RWPE1 (cell line): ENCODE measurements at regions of chr20 and their contacts with region 1.

Region 1: GRCh38 chr20:45138561-45139300 is 14.5 kb upstream of the WFDC12 start:
- DNase-seq: peak; percentile 80
- H3K27ac ChIP-seq: no peak overlapping the region
- CTCF ChIP-seq: peak; percentile 88

Region 2: DNA sequence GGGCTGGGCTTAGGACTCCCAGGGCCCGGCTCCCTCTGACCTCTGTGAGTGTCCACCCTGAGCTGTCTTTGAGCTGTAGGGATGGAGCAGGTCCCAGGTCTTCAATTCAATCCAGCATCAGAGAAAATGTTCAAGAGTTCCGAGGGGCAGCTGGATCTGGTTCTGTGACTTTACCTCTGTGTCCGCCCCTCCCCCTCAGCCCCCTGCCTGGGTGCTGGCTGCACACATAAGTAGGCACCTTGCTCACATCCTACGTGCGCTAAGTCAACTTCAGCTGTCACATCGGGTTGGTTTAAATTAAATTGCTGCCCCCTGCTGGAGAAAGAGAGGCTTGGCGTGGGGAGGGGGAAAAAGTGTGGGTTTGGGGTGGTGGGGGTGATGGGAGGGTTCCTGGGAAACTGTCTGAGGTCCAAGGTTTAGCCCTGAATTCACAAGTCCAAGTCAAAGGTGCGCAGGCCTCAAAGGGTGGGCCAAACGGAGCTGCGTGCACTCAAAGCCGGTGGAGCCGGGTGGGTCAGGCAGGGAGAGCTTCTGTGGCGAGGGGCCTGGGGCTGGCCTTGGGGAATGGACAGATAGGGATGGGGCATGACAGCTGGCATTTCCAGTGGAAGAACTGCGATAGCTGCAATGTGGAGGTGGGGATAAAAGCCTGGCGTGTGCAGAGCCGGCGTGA is 26.8 kb before region 1 on chr20:
- CTCF ChIA-PET with region 1: interaction called, 17 read pairs
- POLR2A ChIA-PET with region 1: no interaction called
- DNase-seq: no peak
- H3K27ac ChIP-seq: no peak overlapping the region
- CTCF ChIP-seq: peak; percentile 66

Region 3: DNA sequence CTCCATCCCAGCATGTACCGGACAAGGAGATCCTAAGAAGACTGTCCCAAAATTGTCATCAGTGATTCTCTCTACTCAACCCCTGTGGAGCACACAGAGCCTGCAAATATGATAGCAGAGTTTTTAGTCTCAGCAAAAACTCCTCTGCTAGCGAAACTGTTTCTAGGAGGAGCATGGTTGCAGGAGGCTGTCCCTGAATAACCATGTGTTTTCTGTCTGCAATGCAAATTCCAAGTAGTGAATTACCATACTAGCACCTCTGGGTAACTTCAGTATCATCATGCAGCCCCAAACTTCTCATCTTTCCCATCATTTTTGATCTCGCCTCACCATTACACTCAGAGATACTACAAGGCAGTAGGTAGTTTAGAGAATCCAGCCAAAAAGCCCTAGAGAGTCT is 10.3 kb after region 1 on chr20:
- CTCF ChIA-PET with region 1: interaction called, 14 read pairs
- POLR2A ChIA-PET with region 1: no interaction called
- DNase-seq: no peak
- H3K27ac ChIP-seq: no peak overlapping the region
- CTCF ChIP-seq: no peak

Region 4: GRCh38 chr20:45283548-45284057 is 144.9 kb after region 1 on chr20:
- CTCF ChIA-PET with region 1: interaction called, 12 read pairs
- POLR2A ChIA-PET with region 1: no interaction called
- DNase-seq: peak; percentile 48
- H3K27ac ChIP-seq: no peak overlapping the region
- CTCF ChIP-seq: no peak

Region 5: DNA sequence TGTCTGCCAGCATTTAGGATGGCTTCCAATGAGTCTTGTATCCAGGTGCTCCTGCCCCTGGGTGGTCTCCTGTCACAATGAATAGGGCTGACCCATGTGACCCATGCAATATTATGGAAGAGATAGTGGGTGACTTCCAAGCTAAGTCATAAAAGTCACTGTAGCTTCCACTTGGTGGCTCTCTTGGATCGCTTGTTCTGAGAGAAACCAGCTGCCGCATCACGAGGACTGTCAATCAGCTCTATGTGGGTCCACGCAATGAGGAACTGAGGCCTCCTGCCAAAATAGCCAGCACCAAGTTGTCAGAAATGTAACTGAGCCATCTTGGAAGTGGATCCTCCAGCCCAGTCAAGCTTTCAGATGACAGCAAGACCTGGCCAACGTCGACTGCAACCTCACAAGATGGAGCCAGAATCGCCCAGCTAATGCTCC is 184.2 kb after region 1 on chr20:
- CTCF ChIA-PET with region 1: interaction called, 13 read pairs
- POLR2A ChIA-PET with region 1: no interaction called
- DNase-seq: no peak
- H3K27ac ChIP-seq: peak overlapping the region; percentile 38
- CTCF ChIP-seq: peak; percentile 71